ENCODE measurements at regions of chr12 and their contacts with region 1.

Region 1: GRCh38 chr12:119444456-119445044 is 110.0 kb downstream of the CCDC60 start:
- DNase-seq: no peak

Region 2: DNA sequence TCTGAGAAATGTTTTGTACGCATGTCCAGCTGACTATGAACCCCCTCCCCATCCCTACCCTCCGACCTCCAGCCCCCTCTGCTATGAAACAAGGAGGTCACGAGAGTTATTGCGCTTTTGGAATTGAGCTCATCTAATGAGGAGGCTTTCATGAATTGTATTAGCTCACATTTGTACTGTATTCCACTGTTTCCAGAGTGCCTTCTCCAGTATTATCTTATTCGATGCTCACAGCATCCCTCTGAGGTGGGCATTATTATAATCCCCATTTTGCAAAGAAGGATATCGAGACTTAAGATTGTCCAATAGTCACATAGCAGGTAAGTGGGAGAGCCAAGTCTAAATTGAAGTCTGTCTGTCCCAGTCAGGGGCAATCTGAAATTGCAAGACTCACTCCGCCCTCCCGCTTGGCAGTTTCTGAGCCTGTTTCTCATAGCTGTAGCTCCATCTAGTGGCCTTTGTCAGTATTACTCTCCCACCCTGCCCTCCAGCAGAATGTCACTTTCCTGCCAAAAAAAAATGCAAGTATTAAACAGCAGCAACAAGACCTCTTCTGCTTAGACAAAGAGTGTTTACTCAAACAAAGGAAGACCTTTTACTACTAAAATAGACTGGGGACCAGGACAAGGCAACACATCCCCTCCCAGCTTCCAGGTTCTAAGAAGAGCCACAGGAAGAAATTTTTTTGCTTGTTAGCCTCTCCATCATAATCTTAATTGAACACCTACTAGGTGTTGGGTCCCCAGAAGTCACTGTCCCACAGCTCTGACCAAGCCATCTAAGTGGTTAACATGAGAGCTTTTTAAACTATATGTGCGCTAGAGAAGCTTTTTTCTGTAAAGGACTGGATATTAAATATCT is 100.4 kb after region 1 on chr12:
- intact Hi-C with region 1: loop called (anchors 5 kb)
- DNase-seq: no peak

Region 3: DNA sequence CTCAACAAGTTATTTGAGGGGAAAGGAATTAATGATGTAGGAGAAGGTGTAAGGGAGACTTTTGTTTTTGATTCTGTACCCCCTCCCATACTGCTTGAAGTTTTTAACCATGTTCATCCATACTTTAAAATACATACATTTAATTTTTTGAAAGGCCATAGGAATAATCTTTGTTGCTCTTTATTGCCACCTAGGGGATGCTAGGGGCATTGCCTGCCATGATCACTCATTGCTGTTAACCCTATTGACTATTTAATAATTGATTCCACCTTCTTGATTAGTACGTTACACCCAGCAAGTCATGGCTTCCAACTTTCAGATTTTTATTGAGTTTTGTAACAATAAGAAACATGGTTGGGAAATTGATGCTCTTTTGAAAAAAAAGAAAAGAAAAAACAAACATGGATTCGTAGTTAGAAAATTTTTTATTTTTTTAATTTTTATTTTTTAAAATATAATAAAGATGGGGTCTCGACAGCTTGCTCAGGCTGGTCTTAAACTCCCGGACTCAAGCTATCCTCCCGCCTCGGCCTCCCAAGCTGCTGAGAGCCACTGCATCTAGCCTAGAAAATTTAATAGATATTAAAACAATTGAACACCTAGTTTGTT is 214.8 kb after region 1 on chr12:
- intact Hi-C with region 1: loop called (anchors 10 kb)
- DNase-seq: no peak